Esophagus muscularis mucosa (tissue), 4 donors: ENCODE measurements at regions of chr4 and their contacts with region 1.

Region 1: DNA sequence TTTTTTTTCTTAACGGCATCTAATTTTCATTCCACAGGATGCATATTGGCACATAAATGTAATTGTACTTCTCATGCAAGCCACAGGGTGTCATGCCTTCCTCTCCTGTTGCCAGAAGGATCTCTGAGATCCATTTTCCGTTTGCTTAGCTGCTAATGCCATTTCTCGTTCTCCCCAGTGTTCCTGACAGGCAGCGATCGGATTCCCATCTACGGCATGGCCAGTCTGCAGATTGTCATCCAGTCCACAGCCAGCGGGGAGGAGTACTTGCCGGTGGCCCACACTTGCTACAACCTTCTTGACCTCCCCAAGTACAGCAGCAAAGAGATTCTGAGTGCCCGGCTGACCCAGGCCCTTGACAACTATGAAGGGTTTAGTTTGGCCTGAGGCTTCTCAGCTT is 8.9 kb upstream of the NAP1L5 start:
- DNase-seq: no peak
- H3K4me3 ChIP-seq: no peak overlapping the region
- H3K27ac ChIP-seq: peak overlapping the region; percentile 42 to 60 (median 50)
- H3K4me1 ChIP-seq: peaks cover 4 to 22% (median 18%) of the 10 kb centered on the region in 4 donors
- H3K27me3 ChIP-seq: no peaks in the 10 kb centered on the region
- CTCF ChIP-seq: peak; percentile 55 to 72 (median 57)
- EP300 ChIP-seq: no peak
- POLR2A ChIP-seq: no peak

Region 2: DNA sequence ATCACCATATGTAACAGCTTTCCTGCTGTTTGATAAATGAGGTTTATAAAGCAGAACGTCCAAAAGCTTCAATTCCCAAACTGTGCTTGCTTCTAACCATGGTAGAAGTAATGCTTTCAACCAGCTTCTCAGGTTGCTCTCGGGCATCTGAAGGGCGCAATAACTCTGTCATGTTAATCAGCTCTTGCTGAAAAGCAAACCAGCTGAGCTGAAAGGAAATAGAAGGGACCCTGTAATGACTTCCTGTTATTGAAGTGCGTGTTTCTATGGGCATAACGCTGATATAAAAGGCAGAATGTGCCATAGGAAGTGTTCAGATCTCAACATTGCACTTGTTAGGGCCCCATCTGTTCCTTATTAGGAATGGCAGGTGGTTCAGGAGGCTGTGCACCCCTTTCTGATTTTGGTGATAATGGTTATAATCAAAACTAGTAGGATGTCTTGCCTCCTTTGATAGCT is 93.1 kb before region 1 on chr4:
- intact Hi-C with region 1: no loop called
- DNase-seq: no peak
- H3K4me3 ChIP-seq: no peak overlapping the region
- H3K27ac ChIP-seq: peak overlapping the region; percentile 77 to 86 (median 82)
- H3K4me1 ChIP-seq: peaks cover 53 to 87% (median 66%) of the 10 kb centered on the region in 4 donors
- H3K27me3 ChIP-seq: no peaks in the 10 kb centered on the region
- CTCF ChIP-seq: no peak
- EP300 ChIP-seq: no peak
- POLR2A ChIP-seq: no peak

Region 3: GRCh38 chr4:88761861-88762508 is 55.4 kb after region 1 on chr4:
- intact Hi-C with region 1: loop called (anchors 5 kb)
- DNase-seq: no peak
- H3K4me3 ChIP-seq: no peak overlapping the region
- H3K27ac ChIP-seq: no peak overlapping the region
- H3K4me1 ChIP-seq: peaks cover 12 to 22% (median 15%) of the 10 kb centered on the region in 4 donors
- H3K27me3 ChIP-seq: no peaks in the 10 kb centered on the region
- CTCF ChIP-seq: no peak
- EP300 ChIP-seq: no peak
- POLR2A ChIP-seq: no peak

Region 4: DNA sequence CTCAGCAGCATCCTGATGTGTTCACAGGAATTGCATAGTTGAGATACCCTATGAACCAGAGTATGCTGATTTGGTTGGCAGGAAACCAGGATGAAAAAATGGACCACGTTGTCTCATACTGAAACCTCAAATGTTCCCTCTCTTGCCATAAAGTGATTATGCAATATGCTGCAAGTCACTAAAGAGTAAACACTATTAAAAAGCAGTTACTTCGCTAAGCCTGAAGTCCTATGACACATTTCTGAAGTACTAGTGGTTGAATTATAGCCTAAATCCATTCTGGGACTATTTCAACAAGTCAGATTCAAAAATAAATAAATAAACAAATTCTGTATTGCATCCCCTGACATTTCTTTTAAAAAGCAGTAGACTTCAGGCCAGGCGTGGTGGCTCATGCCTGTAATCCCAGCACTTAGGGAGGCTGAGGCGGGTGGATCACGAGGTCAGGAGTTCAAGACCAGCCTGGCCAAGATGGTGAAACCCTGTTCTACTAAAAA is 97.1 kb after region 1 on chr4:
- intact Hi-C with region 1: loop called (anchors 10 kb)
- DNase-seq: no peak
- H3K4me3 ChIP-seq: no peak overlapping the region
- H3K27ac ChIP-seq: peak overlapping the region in 1 of 4 donors; percentile 42
- H3K4me1 ChIP-seq: peaks cover 5 to 25% (median 16%) of the 10 kb centered on the region in 4 donors
- H3K27me3 ChIP-seq: no peaks in the 10 kb centered on the region
- CTCF ChIP-seq: no peak
- EP300 ChIP-seq: no peak
- POLR2A ChIP-seq: no peak

Region 5: DNA sequence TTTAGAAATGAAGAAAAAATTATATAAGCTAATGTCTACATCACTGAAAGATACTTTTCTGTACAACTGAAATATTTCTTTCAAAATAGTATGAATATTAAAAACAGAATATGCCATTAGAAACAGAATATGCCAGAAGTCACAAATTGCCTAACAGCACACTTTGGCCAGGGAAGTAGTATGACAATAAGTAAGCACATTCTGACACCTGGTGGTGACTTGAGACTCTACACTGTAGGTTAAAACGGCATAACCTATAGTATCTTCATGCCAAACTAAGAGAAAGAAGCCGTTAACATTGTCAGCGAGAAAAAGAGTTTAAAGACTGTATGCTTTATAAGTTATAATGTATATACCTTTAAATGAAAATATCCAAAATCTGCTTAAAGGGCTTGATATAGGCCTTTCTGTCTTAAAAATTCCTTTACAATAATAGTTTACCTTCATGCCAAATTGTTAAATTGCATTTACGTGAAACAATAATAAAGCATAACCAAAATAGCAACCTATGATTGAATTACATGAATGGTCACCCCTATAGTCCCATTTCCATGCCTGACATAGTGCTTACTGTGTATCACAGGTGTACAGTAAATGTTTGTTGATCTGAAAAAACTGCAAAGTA is 317.6 kb after region 1 on chr4:
- intact Hi-C with region 1: loop called (anchors 5 kb)
- DNase-seq: no peak
- H3K4me3 ChIP-seq: no peak overlapping the region
- H3K27ac ChIP-seq: no peak overlapping the region
- H3K4me1 ChIP-seq: peaks cover 0 to 8% (median 2%) of the 10 kb centered on the region in 4 donors
- H3K27me3 ChIP-seq: no peaks in the 10 kb centered on the region
- CTCF ChIP-seq: peak; percentile 84 to 91 (median 88)
- EP300 ChIP-seq: no peak
- POLR2A ChIP-seq: no peak

Region 6: DNA sequence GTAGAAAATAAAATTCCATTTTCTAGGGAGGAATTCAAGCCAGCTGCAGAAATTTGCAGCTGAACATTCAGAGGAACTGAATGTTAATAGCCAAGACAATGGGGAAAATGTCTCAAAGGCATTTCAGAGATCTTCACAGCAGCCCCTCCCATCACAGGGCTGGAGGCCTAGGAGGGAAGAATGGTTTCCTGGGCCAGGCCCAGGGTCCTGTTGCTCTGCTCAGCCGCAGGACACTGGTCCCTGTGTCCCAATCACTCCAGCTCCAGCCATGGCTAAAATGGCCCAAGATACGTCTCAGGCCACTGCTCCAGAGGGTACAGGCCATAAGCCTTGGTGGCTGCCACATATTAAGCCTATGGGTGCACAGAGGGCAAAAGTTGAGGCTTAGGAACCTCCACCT is 330.0 kb after region 1 on chr4:
- intact Hi-C with region 1: no loop called
- DNase-seq: no peak
- H3K4me3 ChIP-seq: no peak overlapping the region
- H3K27ac ChIP-seq: no peak overlapping the region
- H3K4me1 ChIP-seq: no peaks in the 10 kb centered on the region
- H3K27me3 ChIP-seq: no peaks in the 10 kb centered on the region
- CTCF ChIP-seq: no peak
- EP300 ChIP-seq: no peak
- POLR2A ChIP-seq: no peak